ENCODE measurements at regions of chr9 and their contacts with region 1.

Region 1: DNA sequence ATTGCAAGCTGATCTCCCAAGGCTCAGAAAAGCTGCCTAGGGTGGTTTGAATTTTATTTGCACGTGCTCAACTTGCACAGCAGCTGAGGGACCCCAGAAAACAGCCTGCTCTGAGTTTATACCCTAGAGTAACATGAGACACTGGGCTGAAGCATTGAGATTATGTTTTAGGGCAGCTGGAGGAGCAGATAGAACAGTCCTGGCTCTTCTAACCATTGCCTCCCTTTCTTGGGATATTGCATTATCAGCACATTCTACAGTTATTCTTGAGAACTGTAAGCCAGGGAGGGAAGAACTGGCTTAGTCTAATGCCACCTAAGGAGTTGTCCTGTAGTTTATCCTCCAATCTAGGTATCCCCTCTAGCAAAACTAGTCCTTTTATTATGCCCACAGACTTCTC is 10.3 kb downstream of the SMC2 start:
- DNase-seq: no peak

Region 2: GRCh38 chr9:103913899-103914298 is 190.5 kb before region 1 on chr9:
- CTCF ChIA-PET with region 1: no interaction called
- POLR2A ChIA-PET with region 1: no interaction called
- DNase-seq: no peak

Region 3: GRCh38 chr9:104093647-104094533 is 10.5 kb before region 1 on chr9 and contains the start of gene SMC2:
- CTCF ChIA-PET with region 1: no interaction called
- POLR2A ChIA-PET with region 1: interaction called, 12 read pairs
- DNase-seq: peak; percentile 84

Region 4: GRCh38 chr9:104177003-104177611 is 72.7 kb after region 1 on chr9:
- CTCF ChIA-PET with region 1: no interaction called
- POLR2A ChIA-PET with region 1: no interaction called
- DNase-seq: peak; percentile 7

Region 5: GRCh38 chr9:104209387-104209786 is 105.0 kb after region 1 on chr9:
- CTCF ChIA-PET with region 1: no interaction called
- POLR2A ChIA-PET with region 1: no interaction called
- DNase-seq: no peak

Measured in HEK293T (cell line).